Transverse colon (tissue), 4 donors: ENCODE measurements at regions of chr2 and their contacts with region 1.

Region 1: DNA sequence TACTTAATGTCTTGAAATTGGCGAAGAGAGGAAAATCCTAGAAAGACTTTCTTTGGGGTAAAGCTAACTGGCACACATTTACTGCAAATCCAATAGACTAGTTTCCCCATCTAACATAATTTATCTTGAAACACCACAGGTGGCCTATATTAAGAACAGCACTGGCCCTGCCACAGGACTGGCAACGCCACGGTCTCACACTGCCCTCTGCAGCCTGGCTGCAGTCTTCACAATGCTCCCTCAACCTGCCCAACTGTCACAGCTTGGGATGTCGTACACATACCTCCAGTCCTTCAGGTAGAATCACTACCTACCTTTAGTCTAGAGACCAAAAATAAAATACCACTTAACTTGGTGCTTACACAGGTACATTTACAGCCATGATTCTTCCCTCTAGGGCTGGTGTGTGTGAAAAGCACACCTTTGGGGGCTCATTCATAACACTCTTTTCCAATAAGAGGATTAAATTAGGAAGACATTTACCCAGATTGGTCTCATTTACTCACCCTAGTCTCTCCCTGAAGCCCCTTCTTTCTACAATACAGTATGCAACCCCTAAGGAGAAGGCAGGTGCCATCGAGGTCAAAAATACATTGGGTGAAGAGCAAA is 222.2 kb downstream of the C1D start:
- DNase-seq: peak; percentile 59
- H3K4me3 ChIP-seq: no peak overlapping the region
- H3K27ac ChIP-seq: no peak overlapping the region
- H3K4me1 ChIP-seq: peaks cover 0 to under 1% (median 0%) of the 10 kb centered on the region in 4 donors
- H3K27me3 ChIP-seq: peaks cover 4% of the 10 kb centered on the region
- CTCF ChIP-seq: peak; percentile 63 to 75 (median 64)
- EP300 ChIP-seq: no peak
- POLR2A ChIP-seq: no peak

Region 2: DNA sequence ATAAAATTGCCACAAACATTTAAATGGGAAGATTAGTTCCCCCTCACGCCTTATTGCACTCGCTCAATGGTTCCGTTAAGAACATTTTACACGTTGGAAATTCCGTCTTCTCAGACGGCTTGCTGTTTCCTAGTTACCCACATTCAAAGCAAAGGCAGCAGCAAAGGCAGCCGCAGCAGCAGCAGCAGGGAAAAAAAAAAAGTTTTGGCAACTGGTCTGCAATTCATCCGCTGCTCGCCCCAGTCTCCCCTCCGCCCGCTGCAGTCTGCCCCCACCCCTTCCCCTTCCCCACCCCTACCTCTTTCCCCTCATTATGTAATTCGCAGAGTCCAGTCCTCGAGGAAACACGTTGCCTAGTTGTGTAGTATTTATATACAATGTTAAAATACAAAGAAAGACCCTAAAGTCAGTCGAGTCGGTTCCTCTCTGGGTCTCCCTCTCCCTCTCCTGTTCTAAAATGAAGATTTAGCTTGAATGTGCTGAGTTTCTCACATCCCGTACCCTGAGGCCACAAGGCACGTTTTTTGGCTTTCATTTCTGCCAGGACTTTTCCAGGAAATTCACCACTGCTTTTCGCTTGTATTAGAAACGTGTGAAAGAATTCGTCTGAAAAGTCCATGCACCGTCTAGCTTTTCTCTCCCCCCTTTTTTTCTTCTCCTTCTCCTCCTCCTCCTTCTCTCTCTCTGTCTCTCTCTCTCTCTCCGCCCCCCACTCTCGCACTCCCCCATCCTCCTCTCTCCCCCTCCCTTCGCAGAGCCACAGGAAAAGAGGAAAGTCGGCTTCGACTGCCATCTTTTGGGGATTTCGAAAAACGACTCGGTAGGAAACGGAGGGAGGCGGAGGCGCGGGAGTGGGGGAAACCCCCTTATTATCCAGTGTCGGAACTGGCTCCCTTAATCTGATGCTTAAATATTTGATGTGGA is 1265.6 kb before region 1 on chr2:
- in situ Hi-C with region 1: no loop called
- intact Hi-C with region 1: loop called (anchors 10 kb)
- DNase-seq: peak; percentile 44
- H3K4me3 ChIP-seq: peak overlapping the region; percentile 34 to 65 (median 46)
- H3K27ac ChIP-seq: peak overlapping the region; percentile 79 to 96 (median 90)
- H3K4me1 ChIP-seq: peaks cover 0 to 33% (median 9%) of the 10 kb centered on the region in 4 donors
- H3K27me3 ChIP-seq: peaks cover 70% of the 10 kb centered on the region
- CTCF ChIP-seq: peak in 4 of 5 experiments; percentile 15 to 34 (median 26)
- EP300 ChIP-seq: no peak
- POLR2A ChIP-seq: no peak

Region 3: GRCh38 chr2:67476809-67477790 is 363.5 kb before region 1 on chr2:
- in situ Hi-C with region 1: loop called in 1 of 4 experiments (anchors 25 kb)
- intact Hi-C with region 1: no loop called
- DNase-seq: peak; percentile 45
- H3K4me3 ChIP-seq: no peak overlapping the region
- H3K27ac ChIP-seq: peak overlapping the region in 3 of 4 donors; percentile 31 to 47 (median 36)
- H3K4me1 ChIP-seq: peaks cover 5 to 16% (median 10%) of the 10 kb centered on the region in 4 donors
- H3K27me3 ChIP-seq: peaks cover 23% of the 10 kb centered on the region
- CTCF ChIP-seq: peak; percentile 38 to 60 (median 43)
- EP300 ChIP-seq: no peak
- POLR2A ChIP-seq: no peak